Spleen (tissue), 13 donors: ENCODE measurements at regions of chr22 and their contacts with region 1.

Region 1: DNA sequence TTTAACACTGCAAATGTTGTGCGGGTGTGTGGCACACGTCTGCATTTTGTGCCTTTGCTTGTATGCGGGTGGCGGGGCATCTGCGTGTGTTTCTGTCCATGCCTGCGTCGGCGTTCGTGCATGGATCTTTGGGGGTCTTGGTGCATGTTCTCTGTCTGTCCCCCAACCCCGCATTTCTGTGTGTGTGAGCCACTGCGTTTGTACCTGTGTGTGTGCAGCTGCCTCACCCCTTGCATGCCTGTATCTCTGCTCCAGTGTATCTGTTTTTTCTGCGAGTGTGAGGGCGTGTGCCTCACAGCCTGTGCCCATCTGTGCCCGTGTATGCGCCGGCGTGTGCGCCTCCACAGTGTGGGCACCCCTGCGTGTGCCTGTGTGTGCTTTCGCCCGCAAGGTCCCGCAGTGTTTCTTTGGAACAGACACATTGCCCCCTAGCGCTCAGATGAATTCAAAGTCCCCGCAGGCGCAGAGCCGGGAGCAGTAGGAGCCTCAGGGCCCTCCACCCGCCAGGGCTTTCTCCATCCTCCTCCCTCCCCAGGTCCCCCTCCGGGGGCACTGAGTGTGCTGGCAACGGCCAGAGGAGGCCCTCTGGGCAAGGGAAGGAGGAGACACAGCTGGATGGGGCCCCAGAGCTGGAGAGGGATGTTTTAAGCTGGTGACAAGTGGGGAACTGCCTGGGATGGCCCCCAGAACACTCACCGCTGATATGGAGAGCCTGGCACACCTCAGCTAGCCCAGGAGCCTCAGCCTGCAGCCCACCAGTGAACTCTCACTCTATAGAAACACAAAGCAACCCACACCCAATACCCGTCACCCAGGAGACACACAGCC is 3.1 kb upstream of the MN1 start:
- DNase-seq: no peak
- H3K4me3 ChIP-seq: no peak overlapping the region
- H3K27ac ChIP-seq: no peak overlapping the region
- H3K4me1 ChIP-seq: peaks cover 11 to 45% (median 28%) of the 10 kb centered on the region in 6 donors
- H3K27me3 ChIP-seq: peaks cover 0 to 64% (median 20%) of the 10 kb centered on the region in 7 donors
- CTCF ChIP-seq: peak; percentile 16 to 78 (median 61)
- POLR2A ChIP-seq: no peak

Region 2: GRCh38 chr22:26756675-26757293 is 1047.9 kb before region 1 on chr22:
- intact Hi-C with region 1: loop called (anchors 5 kb)
- DNase-seq: peak; percentile 75
- H3K4me3 ChIP-seq: peak overlapping the region in 2 of 8 donors; percentile 13 to 50
- H3K27ac ChIP-seq: no peak overlapping the region
- H3K4me1 ChIP-seq: peaks cover 0 to 10% (median 6%) of the 10 kb centered on the region in 6 donors
- H3K27me3 ChIP-seq: no peaks in the 10 kb centered on the region
- CTCF ChIP-seq: peak in 10 of 11 experiments; percentile 45 to 93 (median 80)
- POLR2A ChIP-seq: no peak

Region 3: GRCh38 chr22:27405672-27406388 is 398.9 kb before region 1 on chr22:
- intact Hi-C with region 1: loop called (anchors 10 kb)
- DNase-seq: no peak
- H3K4me3 ChIP-seq: no peak overlapping the region
- H3K27ac ChIP-seq: no peak overlapping the region
- H3K4me1 ChIP-seq: no peaks in the 10 kb centered on the region
- H3K27me3 ChIP-seq: peaks cover 0 to 51% (median 6%) of the 10 kb centered on the region in 7 donors
- CTCF ChIP-seq: peak in 8 of 11 experiments; percentile 24 to 66 (median 52)
- POLR2A ChIP-seq: no peak

Region 4: DNA sequence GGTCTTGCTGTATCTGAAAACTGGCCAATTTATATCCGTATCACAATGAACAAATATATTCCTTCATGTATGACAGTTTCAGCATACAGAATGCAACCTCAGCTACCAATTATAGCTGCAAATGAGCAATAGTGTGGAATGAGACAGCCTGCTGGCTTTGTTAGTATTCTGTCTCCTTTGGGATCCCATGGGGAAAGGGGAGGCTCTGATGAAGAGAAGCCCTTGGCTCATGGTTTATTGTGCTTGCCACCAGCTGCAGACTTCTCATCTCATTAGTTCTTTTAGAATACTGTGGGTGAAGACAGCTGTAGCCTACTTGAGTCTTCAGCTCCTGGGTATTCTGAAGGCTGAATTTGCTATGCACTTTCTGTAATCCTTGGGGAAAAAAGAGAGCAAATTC is 72.0 kb after region 1 on chr22:
- intact Hi-C with region 1: no loop called
- DNase-seq: no peak
- H3K4me3 ChIP-seq: no peak overlapping the region
- H3K27ac ChIP-seq: no peak overlapping the region
- H3K4me1 ChIP-seq: peaks cover 12 to 55% (median 31%) of the 10 kb centered on the region in 6 donors
- H3K27me3 ChIP-seq: no peaks in the 10 kb centered on the region
- CTCF ChIP-seq: no peak
- POLR2A ChIP-seq: no peak